Dorsolateral prefrontal cortex (tissue), 120 donors: ENCODE measurements at regions of chr6 and their contacts with region 1.

Region 1: DNA sequence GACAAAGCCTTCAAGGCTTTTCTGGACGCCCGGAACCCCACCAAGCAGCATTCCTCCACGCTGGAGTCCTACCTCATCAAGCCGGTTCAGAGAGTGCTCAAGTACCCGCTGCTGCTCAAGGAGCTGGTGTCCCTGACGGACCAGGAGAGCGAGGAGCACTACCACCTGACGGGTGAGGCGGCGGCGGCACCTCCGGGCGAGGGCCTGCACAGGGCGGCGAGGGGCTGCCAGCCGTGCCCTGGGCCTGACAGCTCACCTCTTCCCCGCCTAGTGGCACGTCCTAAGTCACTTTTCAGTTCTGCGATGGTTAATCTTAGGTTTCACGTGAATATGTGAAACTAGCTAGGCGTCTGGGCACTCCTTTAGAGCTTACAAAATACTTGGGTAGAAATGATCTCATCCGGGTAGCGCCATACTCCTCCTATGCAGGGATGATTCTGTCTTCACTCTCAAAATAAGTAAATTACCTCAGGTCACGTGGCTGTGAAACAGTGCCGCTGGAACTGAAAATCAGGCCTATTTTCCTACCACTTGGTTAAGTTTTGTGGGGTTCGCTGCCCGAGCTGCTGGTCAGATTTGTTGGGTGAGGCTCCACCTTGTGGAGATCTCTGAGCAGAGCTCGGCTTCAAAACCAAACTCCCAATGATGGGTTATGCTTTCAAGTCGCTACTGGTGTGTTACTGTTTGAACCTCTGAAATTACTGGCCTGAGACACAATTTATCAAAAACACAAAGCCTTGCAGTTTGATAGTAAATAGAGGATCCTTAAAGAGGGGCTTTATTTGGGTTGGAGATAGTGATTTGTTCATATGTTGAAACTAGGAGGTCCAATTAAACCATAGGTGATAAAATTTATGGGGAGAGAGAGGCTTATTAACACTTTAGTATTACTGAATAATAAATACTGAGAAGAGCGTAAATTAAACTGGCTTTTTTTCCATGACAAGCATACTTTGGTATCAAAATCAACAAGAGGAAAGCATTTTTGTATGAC is 15.5 kb upstream of the CLDN20 start:
- DNase-seq: peak in 8 of 10 donors; percentile 35 to 81 (median 68)
- H3K4me3 ChIP-seq: peak overlapping the region in 7 of 59 donors; percentile 1 to 40 (median 22)
- H3K27ac ChIP-seq: peak overlapping the region in 45 of 59 donors; percentile 3 to 86 (median 55)
- H3K27me3 ChIP-seq: no peaks in the 10 kb centered on the region
- CTCF ChIP-seq: peak; percentile 34 to 87 (median 79)

Region 2: DNA sequence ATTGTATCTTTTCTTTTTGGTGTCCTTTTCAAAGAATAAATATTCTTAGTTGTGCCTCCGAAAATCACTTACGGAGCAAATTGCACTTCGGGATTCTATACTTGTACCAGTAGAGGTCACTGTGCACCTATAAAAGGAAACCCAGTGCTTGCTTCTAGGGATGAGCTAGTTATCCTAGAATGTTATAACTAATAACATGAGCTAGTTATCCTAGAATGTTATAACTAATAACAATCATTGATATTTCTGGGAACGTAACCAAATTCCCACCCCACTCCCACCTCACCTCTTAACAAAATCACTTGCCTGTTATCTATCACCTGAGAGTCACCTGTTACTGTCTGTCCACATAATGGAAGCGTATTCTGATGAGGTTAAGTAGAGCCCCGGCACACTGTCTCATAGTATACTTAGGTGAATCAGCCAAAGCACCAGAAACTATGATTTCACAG is 380.1 kb before region 1 on chr6:
- intact Hi-C with region 1: loop called in 1 of 2 experiments (anchors 10 kb)
- DNase-seq: no peak
- H3K4me3 ChIP-seq: no peak overlapping the region
- H3K27ac ChIP-seq: no peak overlapping the region
- H3K27me3 ChIP-seq: no peaks in the 10 kb centered on the region
- CTCF ChIP-seq: peak; percentile 59 to 88 (median 76)

Region 3: GRCh38 chr6:154928325-154928922 is 319.9 kb before region 1 on chr6:
- intact Hi-C with region 1: loop called in 1 of 2 experiments (anchors 5 kb)
- DNase-seq: peak in 6 of 10 donors; percentile 37 to 69 (median 49)
- H3K4me3 ChIP-seq: no peak overlapping the region
- H3K27ac ChIP-seq: no peak overlapping the region
- H3K27me3 ChIP-seq: no peaks in the 10 kb centered on the region
- CTCF ChIP-seq: peak; percentile 65 to 91 (median 78)